ENCODE measurements at regions of chrX and their contacts with region 1.

Region 1: DNA sequence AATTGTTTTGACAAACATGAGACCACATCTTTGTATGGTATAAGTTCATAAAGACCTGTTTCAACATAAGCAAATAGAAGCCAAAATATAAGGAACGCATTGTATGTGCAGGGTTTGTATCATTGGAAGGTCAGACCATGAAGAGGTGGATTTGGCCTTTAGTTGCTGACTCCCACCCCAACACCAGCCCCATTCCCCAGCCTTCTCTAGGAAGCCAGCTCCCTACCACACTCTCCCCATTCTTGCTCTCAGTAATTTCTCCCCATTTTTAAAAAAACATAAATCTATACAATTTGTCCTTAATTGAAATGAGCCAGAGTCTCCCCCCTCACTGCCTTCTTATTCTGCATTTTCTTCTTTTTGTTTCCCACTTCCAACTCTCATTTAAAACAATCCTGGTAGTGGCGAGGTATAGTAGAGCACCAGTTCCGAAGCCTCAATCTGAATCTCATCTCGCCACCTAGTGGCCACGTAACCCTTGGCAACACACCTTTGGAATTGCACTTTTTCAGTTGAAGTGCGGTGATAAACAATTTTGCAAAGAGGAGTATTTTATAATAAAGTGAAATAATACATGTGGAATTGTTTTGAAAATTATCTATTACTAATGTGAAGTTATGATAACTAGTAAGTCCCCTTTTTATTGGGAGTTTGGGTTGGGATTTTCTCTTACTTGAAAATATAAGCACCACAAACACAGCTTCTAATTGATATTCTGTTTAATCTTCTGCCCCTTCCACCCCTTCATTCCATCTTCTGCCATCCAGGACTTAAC is 126.6 kb downstream of the ASB9 start:
- DNase-seq: peak; percentile 70
- ATAC-seq: peak; percentile 60
- H3K4me3 Mint-ChIP-seq: no peak overlapping the region
- H3K27ac Mint-ChIP-seq: no peak overlapping the region
- H3K4me1 Mint-ChIP-seq: peaks cover 13% of the 10 kb centered on the region
- H3K27me3 Mint-ChIP-seq: no peaks in the 10 kb centered on the region

Region 2: GRCh38 chrX:14039344-14039743 is 1103.9 kb before region 1 on chrX:
- CTCF ChIA-PET with region 1: no interaction called
- POLR2A ChIA-PET with region 1: no interaction called
- intact Hi-C with region 1: loop called (anchors 1 to 2 kb)
- DNase-seq: peak; percentile 71
- ATAC-seq: peak; percentile 68
- H3K4me3 Mint-ChIP-seq: no peak overlapping the region
- H3K27ac Mint-ChIP-seq: no peak overlapping the region
- H3K4me1 Mint-ChIP-seq: no peaks in the 10 kb centered on the region
- H3K27me3 Mint-ChIP-seq: no peaks in the 10 kb centered on the region

Region 3: GRCh38 chrX:14095702-14096101 is 1047.5 kb before region 1 on chrX:
- CTCF ChIA-PET with region 1: no interaction called
- POLR2A ChIA-PET with region 1: no interaction called
- intact Hi-C with region 1: loop called (anchors 1 to 5 kb)
- DNase-seq: peak; percentile 59
- ATAC-seq: peak; percentile 63
- H3K4me3 Mint-ChIP-seq: no peak overlapping the region
- H3K27ac Mint-ChIP-seq: no peak overlapping the region
- H3K4me1 Mint-ChIP-seq: no peaks in the 10 kb centered on the region
- H3K27me3 Mint-ChIP-seq: peaks cover under 1% of the 10 kb centered on the region

Region 4: GRCh38 chrX:14528629-14529289 is 614.5 kb before region 1 on chrX:
- CTCF ChIA-PET with region 1: no interaction called
- POLR2A ChIA-PET with region 1: no interaction called
- intact Hi-C with region 1: loop called in 1 of 2 experiments (anchors 2 kb)
- DNase-seq: peak; percentile 73
- ATAC-seq: peak; percentile 30
- H3K4me3 Mint-ChIP-seq: no peak overlapping the region
- H3K27ac Mint-ChIP-seq: no peak overlapping the region
- H3K4me1 Mint-ChIP-seq: no peaks in the 10 kb centered on the region
- H3K27me3 Mint-ChIP-seq: peaks cover 4% of the 10 kb centered on the region

Region 5: GRCh38 chrX:15107367-15107988 is 35.8 kb before region 1 on chrX:
- CTCF ChIA-PET with region 1: no interaction called
- POLR2A ChIA-PET with region 1: no interaction called
- intact Hi-C with region 1: loop called in 1 of 2 experiments (anchors 2 kb)
- DNase-seq: no peak
- ATAC-seq: no peak
- H3K4me3 Mint-ChIP-seq: no peak overlapping the region
- H3K27ac Mint-ChIP-seq: no peak overlapping the region
- H3K4me1 Mint-ChIP-seq: no peaks in the 10 kb centered on the region
- H3K27me3 Mint-ChIP-seq: peaks cover 4% of the 10 kb centered on the region